ENCODE measurements at regions of chr12 and their contacts with region 1.

Region 1: GRCh38 chr12:124388679-124389536 is 94.0 kb downstream of the RFLNA start:
- DNase-seq: peak; percentile 83
- H3K4me3 Mint-ChIP-seq: peak overlapping the region; percentile 81
- H3K27ac Mint-ChIP-seq: peak overlapping the region; percentile 69
- H3K4me1 Mint-ChIP-seq: peaks cover 26% of the 10 kb centered on the region
- H3K27me3 Mint-ChIP-seq: no peaks in the 10 kb centered on the region
- CTCF ChIP-seq: no peak

Region 2: DNA sequence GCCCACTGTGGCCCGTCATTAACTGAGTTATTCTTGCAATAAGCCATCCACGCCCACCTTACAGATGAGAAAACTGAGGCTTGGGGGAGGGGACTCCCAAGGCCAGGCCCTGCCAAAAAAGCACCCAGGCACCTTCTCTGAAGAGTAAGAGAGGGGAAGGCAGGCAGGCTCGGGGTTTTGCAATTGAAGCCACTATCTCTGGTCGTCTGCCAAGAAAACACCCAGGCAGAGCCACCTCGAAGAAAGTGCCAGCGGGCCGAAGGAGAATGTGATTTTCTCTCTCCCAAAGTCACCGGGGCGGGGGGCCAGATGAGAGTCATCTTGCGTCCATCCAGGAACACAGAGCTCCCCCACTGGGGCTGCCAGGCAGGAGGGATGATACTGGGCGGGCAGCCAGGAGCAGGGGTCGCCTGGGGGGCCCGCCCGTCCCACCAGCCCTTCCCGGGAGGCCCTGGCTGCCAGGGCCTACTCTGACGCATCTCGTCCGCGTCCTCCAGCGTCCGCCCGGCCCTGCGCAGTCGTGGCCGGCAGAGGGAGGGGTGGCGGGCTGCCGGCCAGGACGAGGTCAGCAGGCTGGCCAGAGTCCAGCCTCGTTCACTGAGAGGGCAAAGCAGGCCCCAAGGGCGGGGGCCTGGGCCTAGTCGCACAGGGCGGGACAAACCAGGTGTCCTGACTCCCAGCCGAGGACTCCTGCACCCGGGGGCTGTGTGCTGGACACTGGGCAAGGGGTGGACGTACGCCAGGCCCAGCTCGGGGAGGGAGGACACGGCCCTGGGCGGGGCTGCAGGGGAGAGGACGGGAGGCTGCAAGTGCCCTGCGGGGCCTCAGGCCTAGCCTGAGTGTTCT is 19.6 kb before region 1 on chr12:
- CTCF ChIA-PET with region 1: interaction called, 6 read pairs
- POLR2A ChIA-PET with region 1: interaction called, 15 read pairs
- intact Hi-C with region 1: loop called (anchors 2 kb)
- DNase-seq: peak; percentile 96
- H3K4me3 Mint-ChIP-seq: no peak overlapping the region
- H3K27ac Mint-ChIP-seq: peak overlapping the region; percentile 57
- H3K4me1 Mint-ChIP-seq: peaks cover 14% of the 10 kb centered on the region
- H3K27me3 Mint-ChIP-seq: no peaks in the 10 kb centered on the region
- CTCF ChIP-seq: no peak

Region 3: DNA sequence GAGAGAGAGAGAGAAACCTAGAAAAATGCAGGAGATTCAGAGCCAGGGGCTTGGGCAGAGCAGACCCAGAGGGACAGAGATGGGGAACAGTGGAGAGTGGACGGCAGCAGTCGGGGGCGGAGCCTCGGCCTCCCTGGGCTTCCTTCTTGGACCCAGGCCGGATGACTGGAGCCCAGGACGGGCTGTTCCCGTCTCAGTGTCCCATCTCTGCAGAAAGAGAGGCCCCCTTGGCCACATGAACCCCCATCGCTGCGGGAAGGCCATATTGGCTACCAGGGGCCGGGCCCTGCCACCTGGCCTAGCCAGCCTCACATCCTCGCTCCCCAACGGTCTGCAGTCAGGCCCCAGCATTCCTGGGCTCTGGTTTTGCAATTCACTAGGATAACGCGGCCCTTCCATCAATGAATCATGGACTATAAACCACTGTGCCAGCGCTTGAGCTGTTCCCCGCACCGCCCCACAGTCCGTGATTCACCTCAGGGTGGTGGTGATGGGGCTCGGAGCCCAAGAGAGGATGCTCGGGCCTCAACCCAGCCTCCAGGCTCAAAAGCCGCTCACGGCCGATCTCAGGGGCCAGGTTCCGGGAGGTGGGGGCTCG is 22.5 kb after region 1 on chr12:
- CTCF ChIA-PET with region 1: interaction called, 4 read pairs
- POLR2A ChIA-PET with region 1: interaction called, 7 read pairs
- intact Hi-C with region 1: loop called (anchors 1 kb)
- DNase-seq: peak; percentile 93
- H3K4me3 Mint-ChIP-seq: no peak overlapping the region
- H3K27ac Mint-ChIP-seq: peak overlapping the region; percentile 7
- H3K4me1 Mint-ChIP-seq: peaks cover 11% of the 10 kb centered on the region
- H3K27me3 Mint-ChIP-seq: no peaks in the 10 kb centered on the region
- CTCF ChIP-seq: no peak